CD8-positive, alpha-beta memory T cell (primary cell): ENCODE measurements at regions of chr10 and their contacts with region 1.

Region 1: GRCh38 chr10:35195361-35196306 is 69.0 kb downstream of the CREM start:
- DNase-seq: peak; percentile 62 to 94 (median 91)
- H3K4me3 ChIP-seq: peak overlapping the region; percentile 67
- H3K4me3 Mint-ChIP-seq: peak overlapping the region; percentile 79 to 91 (median 84)
- H3K27ac ChIP-seq: peak overlapping the region; percentile 94
- H3K27ac Mint-ChIP-seq: peak overlapping the region; percentile 93 to 100 (median 98)
- H3K4me1 ChIP-seq: peaks cover 16% of the 10 kb centered on the region
- H3K4me1 Mint-ChIP-seq: peaks cover 17 to 39% (median 23%) of the 10 kb centered on the region in 3 donors
- H3K27me3 ChIP-seq: no peaks in the 10 kb centered on the region
- H3K27me3 Mint-ChIP-seq: no peaks in the 10 kb centered on the region

Region 2: DNA sequence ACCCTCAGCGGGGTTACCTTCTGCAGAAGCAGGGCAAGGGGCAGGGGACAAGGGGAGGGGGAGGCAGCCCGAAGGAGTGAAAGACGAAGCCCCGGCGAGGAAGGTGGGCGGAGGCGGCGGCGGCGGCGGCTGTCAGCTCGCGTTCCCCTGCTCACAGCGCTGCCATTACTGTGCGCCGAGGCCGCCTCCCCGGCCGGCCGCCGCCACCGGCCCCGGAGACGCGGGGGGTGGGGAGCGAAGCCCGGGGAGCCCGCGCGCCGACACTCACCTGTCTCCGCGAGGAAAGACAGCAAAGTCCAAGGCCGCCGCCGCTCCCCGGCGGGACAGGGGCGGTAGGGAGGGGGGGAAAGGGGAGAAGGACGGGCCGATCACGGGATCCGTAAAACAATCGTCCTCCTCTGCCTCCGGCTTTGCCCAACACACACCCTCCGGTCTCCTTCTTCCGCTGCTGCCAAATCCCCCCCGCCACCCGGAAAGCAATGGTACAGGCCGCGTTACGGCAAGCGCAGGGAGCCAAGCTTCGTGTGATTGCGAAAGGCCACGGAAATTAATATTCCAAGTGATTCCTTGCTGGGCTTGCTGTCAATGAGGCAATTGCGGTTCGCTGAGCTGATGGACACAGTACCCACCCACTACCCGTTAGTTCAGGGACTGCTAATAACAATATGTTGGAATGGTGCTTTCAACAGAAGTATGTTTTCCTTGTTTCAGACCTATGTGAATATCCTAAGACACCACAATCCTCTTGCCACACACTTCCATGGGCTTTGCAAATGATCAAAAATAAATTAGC is 105.3 kb before region 1 on chr10 and contains the start of gene CUL2:
- CTCF ChIA-PET with region 1: interaction called, 9 read pairs
- POLR2A ChIA-PET with region 1: interaction called, 11 read pairs
- DNase-seq: peak; percentile 86 to 95 (median 93)
- H3K4me3 ChIP-seq: peak within 1 kb of the TSS; percentile 75
- H3K4me3 Mint-ChIP-seq: peak within 1 kb of the TSS; percentile 92 to 100 (median 95)
- H3K27ac ChIP-seq: peak within 1 kb of the TSS; percentile 95
- H3K27ac Mint-ChIP-seq: peak within 1 kb of the TSS; percentile 93 to 100 (median 98)
- H3K4me1 ChIP-seq: peaks cover 36% of the 10 kb centered on the region
- H3K4me1 Mint-ChIP-seq: peaks cover 49 to 56% (median 53%) of the 10 kb centered on the region in 3 donors
- H3K27me3 ChIP-seq: no peaks in the 10 kb centered on the region
- H3K27me3 Mint-ChIP-seq: peaks cover 5 to 10% of the 10 kb centered on the region in 2 donors
- total RNA-seq, gene CUL2: 56.8 to 59.4 TPM

Region 3: DNA sequence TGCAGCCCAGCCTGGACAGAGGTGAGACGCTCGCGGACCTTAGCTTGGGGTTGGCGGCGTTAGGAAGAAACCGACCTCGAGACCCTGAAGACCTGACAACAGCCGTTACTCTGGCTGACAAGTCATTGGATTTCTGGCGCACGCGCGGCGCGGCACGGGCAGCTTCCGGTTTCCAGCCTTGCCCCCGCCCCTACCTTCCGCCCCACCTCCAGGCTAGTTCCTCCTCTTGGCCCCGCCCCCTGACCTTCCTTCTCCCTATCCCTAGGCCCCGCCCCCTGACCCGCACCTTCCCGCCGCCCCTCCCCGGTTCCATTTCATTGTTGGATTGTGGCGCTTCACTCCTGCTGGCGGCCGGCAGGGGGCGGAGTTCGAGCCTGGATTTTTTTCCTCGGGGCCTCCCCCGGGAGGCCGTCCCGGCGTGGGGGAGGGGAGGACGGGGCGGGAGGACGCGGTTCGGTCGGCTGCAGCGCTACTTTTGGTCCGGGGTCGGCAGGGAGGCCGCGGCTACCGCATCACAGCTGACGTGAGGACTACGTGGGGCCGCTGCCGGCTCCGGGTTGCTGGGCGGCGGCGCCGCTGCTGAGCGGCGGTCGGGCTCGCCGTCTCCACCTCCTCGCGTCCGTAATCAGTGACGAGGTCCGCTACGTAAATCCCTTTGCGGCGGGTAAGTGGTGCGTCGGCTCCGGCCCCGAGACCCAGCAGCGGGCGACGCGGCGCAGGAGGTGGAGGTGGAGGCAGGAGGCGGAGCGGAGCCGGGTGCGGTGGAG is 68.9 kb before region 1 on chr10 and contains the start of gene CREM:
- CTCF ChIA-PET with region 1: interaction called, 75 read pairs
- POLR2A ChIA-PET with region 1: interaction called, 113 read pairs
- DNase-seq: peak; percentile 98 to 100 (median 99)
- H3K4me3 ChIP-seq: peak within 1 kb of the TSS; percentile 77
- H3K4me3 Mint-ChIP-seq: peak within 1 kb of the TSS; percentile 85 to 98 (median 91)
- H3K27ac ChIP-seq: peak within 1 kb of the TSS; percentile 100
- H3K27ac Mint-ChIP-seq: peak within 1 kb of the TSS; percentile 88 to 100 (median 99)
- H3K4me1 ChIP-seq: peaks cover 38% of the 10 kb centered on the region
- H3K4me1 Mint-ChIP-seq: peaks cover 33 to 52% (median 41%) of the 10 kb centered on the region in 3 donors
- H3K27me3 ChIP-seq: no peaks in the 10 kb centered on the region
- H3K27me3 Mint-ChIP-seq: peaks cover 0 to 10% of the 10 kb centered on the region in 2 donors
- total RNA-seq, gene CREM: 132 to 134 TPM

Region 4: DNA sequence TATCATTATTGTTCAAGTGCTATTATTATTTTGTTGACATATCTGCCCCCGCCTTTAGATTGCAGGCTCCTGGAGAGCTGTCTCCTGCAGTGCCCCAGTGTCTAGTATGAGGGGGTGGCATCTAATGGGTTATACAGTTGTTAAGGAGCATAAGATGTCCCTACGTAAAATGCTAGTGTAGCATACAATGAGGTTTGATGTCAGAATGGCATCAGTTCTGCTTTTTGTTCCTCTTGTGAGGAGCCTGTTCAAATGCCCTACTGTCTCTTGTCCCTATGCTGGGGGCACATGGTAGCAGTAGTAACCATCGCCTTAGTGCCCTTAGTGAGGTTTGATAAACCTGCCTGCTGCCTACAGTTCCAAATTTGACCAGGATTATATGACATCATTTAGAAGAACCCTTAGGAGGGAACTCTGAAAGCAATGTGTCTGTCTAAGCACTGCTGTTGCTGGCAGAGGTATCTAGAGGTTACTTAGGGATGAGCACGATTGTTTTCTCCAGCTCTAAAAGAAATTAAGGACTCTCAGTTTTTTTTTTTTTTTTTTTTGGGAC is 59.3 kb before region 1 on chr10:
- CTCF ChIA-PET with region 1: interaction called, 41 read pairs
- POLR2A ChIA-PET with region 1: interaction called, 113 read pairs
- DNase-seq: no peak
- H3K4me3 ChIP-seq: no peak overlapping the region
- H3K4me3 Mint-ChIP-seq: peak overlapping the region; percentile 52 to 79 (median 71)
- H3K27ac ChIP-seq: no peak overlapping the region
- H3K27ac Mint-ChIP-seq: peak overlapping the region; percentile 74 to 97 (median 92)
- H3K4me1 ChIP-seq: peaks cover 38% of the 10 kb centered on the region
- H3K4me1 Mint-ChIP-seq: peaks cover 28 to 41% (median 41%) of the 10 kb centered on the region in 3 donors
- H3K27me3 ChIP-seq: no peaks in the 10 kb centered on the region
- H3K27me3 Mint-ChIP-seq: peaks cover 0 to 2% of the 10 kb centered on the region in 2 donors

Region 5: DNA sequence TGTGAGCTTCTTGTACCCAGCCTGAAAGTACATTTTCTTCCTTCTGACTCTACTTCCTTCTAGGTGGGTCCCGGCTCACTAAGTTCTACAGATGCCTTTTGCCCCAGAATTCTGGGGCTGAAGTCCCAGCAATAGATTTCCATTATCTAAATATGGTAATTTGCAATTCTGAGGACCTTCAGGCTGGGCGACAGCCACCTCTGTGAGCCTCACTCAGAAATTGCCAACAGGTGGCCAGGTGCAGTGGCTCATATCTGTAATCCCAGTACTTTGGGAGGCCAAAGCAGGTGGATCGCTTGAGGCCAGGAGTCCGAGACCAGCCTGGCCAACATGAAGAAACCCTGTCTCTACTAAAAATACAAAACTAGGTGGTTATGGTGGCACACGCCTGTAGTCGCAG is 45.3 kb before region 1 on chr10:
- CTCF ChIA-PET with region 1: interaction called, 14 read pairs
- POLR2A ChIA-PET with region 1: interaction called, 4 read pairs
- DNase-seq: no peak
- H3K4me3 ChIP-seq: no peak overlapping the region
- H3K4me3 Mint-ChIP-seq: peak overlapping the region in 4 of 7 donors; percentile 16 to 64 (median 56)
- H3K27ac ChIP-seq: no peak overlapping the region
- H3K27ac Mint-ChIP-seq: peak overlapping the region; percentile 79 to 98 (median 96)
- H3K4me1 ChIP-seq: peaks cover 17% of the 10 kb centered on the region
- H3K4me1 Mint-ChIP-seq: peaks cover 23 to 38% (median 30%) of the 10 kb centered on the region in 3 donors
- H3K27me3 ChIP-seq: no peaks in the 10 kb centered on the region
- H3K27me3 Mint-ChIP-seq: peaks cover 0 to 1% of the 10 kb centered on the region in 2 donors

Region 6: GRCh38 chr10:35218339-35218955 is 22.8 kb after region 1 on chr10:
- CTCF ChIA-PET with region 1: interaction called, 36 read pairs
- POLR2A ChIA-PET with region 1: no interaction called
- DNase-seq: peak; percentile 67 to 86 (median 71)
- H3K4me3 ChIP-seq: no peak overlapping the region
- H3K4me3 Mint-ChIP-seq: peak overlapping the region in 2 of 7 donors; percentile 18 to 28
- H3K27ac ChIP-seq: no peak overlapping the region
- H3K27ac Mint-ChIP-seq: peak overlapping the region in 7 of 8 donors; percentile 7 to 96 (median 85)
- H3K4me1 ChIP-seq: no peaks in the 10 kb centered on the region
- H3K4me1 Mint-ChIP-seq: peaks cover 7 to 18% (median 11%) of the 10 kb centered on the region in 3 donors
- H3K27me3 ChIP-seq: no peaks in the 10 kb centered on the region
- H3K27me3 Mint-ChIP-seq: peaks cover 6 to 10% of the 10 kb centered on the region in 2 donors